Left ventricle myocardium superior (tissue), 1 donor: ENCODE measurements at regions of chr12 and their contacts with region 1.

Region 1: GRCh38 chr12:751192-751998 is 984 bp upstream of the WNK1 start:
- DNase-seq: peak; percentile 96
- ATAC-seq: peak; percentile 70

Region 2: DNA sequence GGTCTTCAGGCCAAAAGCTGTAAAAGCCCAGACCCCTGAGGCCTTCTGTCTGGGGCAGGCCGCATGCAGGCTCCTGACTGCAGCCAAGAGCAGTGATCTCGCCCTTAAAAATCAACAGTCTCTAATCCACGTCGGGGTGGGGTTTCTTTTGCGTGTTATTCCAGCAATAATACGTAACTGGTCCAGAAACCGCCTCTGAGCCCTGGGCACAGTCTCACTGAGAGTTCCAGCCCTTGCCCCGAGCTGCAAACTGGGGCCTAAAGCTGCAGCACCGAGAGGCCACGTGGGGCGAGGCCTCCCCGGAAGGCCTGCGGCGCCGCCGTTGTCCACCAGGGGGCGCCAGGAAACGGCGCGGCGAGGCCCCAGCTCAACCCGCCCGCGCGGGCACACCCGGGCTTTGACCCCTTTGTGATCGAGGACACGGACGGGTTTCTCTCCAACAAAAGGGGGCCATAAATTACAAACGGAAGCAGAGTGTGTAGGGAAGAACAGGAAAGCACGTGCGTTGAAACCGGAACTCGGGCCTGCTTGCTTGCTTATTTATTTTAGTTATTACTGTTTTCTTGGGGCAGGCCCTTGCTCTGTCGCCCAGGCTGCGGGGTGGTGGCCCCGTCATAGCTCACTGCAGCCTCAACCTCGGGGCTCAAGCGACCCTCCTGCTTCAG is 175.3 kb before region 1 on chr12:
- intact Hi-C with region 1: loop called (anchors 5 kb)
- DNase-seq: peak; percentile 93
- ATAC-seq: peak; percentile 52

Region 3: GRCh38 chr12:642633-643474 is 108.5 kb before region 1 on chr12:
- intact Hi-C with region 1: loop called (anchors 10 kb)
- DNase-seq: peak; percentile 89
- ATAC-seq: peak; percentile 73

Region 4: DNA sequence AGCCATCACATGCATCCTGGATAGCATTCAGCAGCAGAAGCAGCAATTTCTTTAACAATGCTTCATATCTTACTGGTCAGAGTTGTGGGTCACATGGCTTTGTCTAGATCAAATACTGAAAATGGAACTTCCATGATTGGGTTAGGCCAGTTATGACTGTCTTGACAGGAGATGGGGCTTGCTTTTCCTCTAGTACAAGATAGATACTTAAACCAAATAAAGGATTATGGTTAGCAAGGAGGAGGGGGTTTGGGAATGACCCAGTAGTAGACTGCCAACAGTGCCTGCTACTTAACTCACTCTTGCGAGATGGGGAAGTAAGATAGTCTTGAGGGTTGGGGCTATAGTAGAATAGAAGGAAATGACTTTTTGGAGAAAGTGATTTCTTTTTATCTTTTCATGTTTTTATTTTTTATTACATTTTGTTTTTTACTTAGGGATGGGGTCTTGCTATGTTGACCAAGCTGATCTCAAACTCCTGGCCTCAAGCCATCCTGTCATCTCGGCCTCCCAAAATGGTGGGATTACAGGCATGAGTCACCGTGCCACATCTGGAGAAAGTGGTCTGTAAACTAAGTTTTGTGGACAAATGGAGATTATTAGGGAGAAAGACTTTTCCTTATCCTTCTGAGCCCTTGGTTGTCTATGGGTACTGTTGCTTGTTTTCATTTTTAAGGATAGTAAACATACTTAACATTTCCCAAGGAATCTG is 38.6 kb after region 1 on chr12:
- intact Hi-C with region 1: no loop called
- DNase-seq: no peak
- ATAC-seq: peak; percentile 24

Region 5: GRCh38 chr12:810671-811415 is 59.4 kb after region 1 on chr12:
- intact Hi-C with region 1: loop called (anchors 10 kb)
- DNase-seq: no peak
- ATAC-seq: no peak